ENCODE measurements at regions of chr3 and their contacts with region 1.

Region 1: GRCh38 chr3:45995236-45996192 is at the start of gene FYCO1:
- DNase-seq: peak; percentile 96 to 97
- ATAC-seq: peak; percentile 91 to 95 (median 94)
- H3K4me3 ChIP-seq: peak within 1 kb of the TSS; percentile 96
- H3K27ac ChIP-seq: peak within 1 kb of the TSS; percentile 99
- H3K4me1 ChIP-seq: peaks cover 46% of the 10 kb centered on the region
- H3K27me3 ChIP-seq: no peaks in the 10 kb centered on the region
- CTCF ChIP-seq: no peak
- total RNA-seq, gene FYCO1: 60.1 to 129 (median 115) TPM

Region 2: DNA sequence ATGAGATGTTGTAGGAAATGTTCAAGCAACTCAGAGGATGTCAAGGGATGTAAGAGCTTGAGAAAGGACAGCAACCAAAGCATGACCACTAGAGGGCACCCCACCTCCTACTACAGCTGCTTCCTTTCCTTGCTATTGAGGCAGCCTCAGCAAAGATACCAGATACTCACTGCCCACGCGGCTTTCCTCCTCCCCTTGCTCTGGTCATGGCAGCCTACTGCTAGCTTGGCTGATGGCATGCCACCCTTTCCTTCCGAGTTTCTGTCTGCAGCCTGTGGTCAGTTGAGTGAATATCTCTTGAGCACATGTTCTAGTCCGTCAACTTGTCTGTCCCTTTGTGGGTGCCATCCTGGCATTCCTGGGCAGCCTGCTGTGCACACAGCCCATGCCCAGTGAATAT is 56.6 kb before region 1 on chr3:
- intact Hi-C with region 1: loop called (anchors 5 kb)
- DNase-seq: peak; percentile 76 to 88
- ATAC-seq: peak; percentile 92 to 96 (median 95)
- H3K4me3 ChIP-seq: no peak overlapping the region
- H3K27ac ChIP-seq: peak overlapping the region; percentile 78
- H3K4me1 ChIP-seq: peaks cover 28% of the 10 kb centered on the region
- H3K27me3 ChIP-seq: no peaks in the 10 kb centered on the region
- CTCF ChIP-seq: peak; percentile 90

Region 3: GRCh38 chr3:46062679-46063078 is 67.2 kb after region 1 on chr3:
- intact Hi-C with region 1: loop called in 1 of 2 experiments (anchors 5 kb)
- DNase-seq: no peak
- ATAC-seq: peak in 3 of 4 donors; percentile 29 to 42 (median 29)
- H3K4me3 ChIP-seq: no peak overlapping the region
- H3K27ac ChIP-seq: peak overlapping the region; percentile 3
- H3K4me1 ChIP-seq: peaks cover 50% of the 10 kb centered on the region
- H3K27me3 ChIP-seq: no peaks in the 10 kb centered on the region
- CTCF ChIP-seq: no peak

Region 4: DNA sequence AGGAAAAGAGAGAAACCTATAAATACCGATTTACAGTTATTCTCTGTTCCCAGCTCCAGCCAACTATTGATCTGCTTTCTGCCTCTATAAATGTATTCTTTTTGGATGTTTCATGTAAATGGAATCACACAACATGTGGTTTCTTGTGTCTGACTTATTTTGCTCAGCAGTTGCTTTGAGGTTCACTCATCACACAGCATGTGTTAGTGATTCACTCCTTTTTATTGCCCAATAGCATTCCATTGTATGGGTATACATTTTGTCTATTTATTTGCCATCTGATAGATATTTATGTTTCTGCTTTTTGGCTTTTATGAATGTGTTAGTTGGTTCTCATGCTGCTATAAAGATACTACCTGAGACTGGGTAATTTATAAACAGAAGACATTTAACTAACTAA is 189.0 kb after region 1 on chr3:
- intact Hi-C with region 1: no loop called
- DNase-seq: no peak
- ATAC-seq: no peak
- H3K4me3 ChIP-seq: no peak overlapping the region
- H3K27ac ChIP-seq: no peak overlapping the region
- H3K4me1 ChIP-seq: no peaks in the 10 kb centered on the region
- H3K27me3 ChIP-seq: no peaks in the 10 kb centered on the region
- CTCF ChIP-seq: no peak

Measured in psoas muscle (tissue), 8 donors.